ENCODE measurements at regions of chr17 and their contacts with region 1.

Region 1: DNA sequence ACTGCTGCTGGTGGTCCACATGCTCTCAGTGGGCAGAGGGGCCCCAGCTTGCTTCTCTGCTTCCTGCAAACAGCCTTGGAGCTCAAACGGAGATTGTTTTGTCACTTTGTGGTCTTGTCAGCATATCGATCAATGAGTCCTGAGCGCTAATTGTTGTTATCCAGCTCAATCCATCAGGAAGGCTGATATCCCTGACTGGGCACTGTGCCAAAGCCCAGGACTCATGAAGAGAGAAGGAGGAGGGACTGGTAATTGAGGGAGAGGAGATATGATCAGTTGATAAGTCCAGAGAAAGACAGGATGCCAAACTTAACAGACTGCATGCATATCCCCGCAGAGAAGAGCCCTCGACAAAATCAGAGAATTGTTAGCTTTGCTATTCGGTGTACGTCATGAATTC is 58.6 kb upstream of the DNAH9 start:
- DNase-seq: no peak
- ATAC-seq: no peak
- H3K4me3 ChIP-seq: no peak overlapping the region
- H3K4me3 Mint-ChIP-seq: no peak overlapping the region
- H3K27ac ChIP-seq: no peak overlapping the region
- H3K27ac Mint-ChIP-seq: no peak overlapping the region
- H3K4me1 ChIP-seq: no peaks in the 10 kb centered on the region
- H3K4me1 Mint-ChIP-seq: no peaks in the 10 kb centered on the region
- H3K27me3 ChIP-seq: no peaks in the 10 kb centered on the region
- H3K27me3 Mint-ChIP-seq: no peaks in the 10 kb centered on the region
- CTCF ChIP-seq: no peak

Region 2: DNA sequence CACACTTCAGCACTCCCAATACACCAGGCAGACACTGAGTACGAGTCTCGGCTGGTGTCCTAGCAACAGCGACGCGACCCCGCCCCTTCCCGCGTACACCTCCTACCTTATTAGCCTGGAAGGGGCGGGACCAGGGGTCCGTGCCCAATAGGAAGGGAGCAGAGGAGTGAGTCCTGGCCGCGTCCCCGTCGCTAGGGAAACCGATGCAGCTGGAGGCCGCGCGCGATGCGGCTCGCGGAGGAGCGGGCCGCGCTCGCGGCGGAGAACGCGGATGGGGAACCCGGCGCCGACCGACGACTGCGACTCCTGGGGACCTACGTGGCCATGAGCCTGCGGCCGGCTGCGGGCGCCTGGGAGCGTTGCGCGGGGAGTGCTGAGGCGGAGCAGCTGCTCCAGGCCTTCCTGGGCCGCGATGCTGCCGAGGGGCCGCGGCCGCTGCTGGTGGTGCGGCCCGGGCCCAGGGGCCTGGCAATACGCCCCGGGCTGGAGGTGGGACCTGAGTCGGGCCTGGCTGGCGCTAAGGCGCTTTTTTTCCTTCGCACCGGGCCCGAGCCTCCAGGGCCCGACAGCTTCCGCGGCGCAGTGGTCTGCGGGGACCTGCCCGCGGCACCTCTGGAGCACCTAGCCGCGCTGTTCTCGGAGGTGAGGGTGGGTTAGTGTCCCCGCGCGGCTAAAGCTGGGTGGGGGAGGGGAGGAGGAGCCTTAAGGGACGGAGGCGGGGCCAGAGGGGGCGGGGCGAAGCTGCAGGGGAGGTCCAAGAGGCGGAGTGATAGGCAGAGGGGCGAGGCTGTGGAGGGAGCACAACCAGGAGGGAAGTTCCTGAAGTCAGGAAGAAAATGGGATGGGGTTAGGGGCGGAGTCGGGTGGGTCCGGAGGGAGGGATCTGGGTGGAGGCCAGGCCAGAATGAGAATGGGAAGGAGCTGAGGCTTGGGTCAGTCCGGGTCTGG is 58.9 kb after region 1 on chr17 and contains the start of gene DNAH9:
- intact Hi-C with region 1: loop called (anchors 10 kb)
- DNase-seq: no peak
- ATAC-seq: no peak
- H3K4me3 ChIP-seq: no peak within 1 kb of the TSS
- H3K4me3 Mint-ChIP-seq: no peak within 1 kb of the TSS
- H3K27ac ChIP-seq: no peak within 1 kb of the TSS
- H3K27ac Mint-ChIP-seq: no peak within 1 kb of the TSS
- H3K4me1 ChIP-seq: no peaks in the 10 kb centered on the region
- H3K4me1 Mint-ChIP-seq: peaks cover 0 to 4% of the 10 kb centered on the region in 2 donors
- H3K27me3 ChIP-seq: peaks cover 7% of the 10 kb centered on the region
- H3K27me3 Mint-ChIP-seq: peaks cover 14 to 19% of the 10 kb centered on the region in 2 donors
- CTCF ChIP-seq: no peak
- total RNA-seq, gene DNAH9: not detected